Caco-2 (cell line): ENCODE measurements at regions of chr11 and their contacts with region 1.

Region 1: DNA sequence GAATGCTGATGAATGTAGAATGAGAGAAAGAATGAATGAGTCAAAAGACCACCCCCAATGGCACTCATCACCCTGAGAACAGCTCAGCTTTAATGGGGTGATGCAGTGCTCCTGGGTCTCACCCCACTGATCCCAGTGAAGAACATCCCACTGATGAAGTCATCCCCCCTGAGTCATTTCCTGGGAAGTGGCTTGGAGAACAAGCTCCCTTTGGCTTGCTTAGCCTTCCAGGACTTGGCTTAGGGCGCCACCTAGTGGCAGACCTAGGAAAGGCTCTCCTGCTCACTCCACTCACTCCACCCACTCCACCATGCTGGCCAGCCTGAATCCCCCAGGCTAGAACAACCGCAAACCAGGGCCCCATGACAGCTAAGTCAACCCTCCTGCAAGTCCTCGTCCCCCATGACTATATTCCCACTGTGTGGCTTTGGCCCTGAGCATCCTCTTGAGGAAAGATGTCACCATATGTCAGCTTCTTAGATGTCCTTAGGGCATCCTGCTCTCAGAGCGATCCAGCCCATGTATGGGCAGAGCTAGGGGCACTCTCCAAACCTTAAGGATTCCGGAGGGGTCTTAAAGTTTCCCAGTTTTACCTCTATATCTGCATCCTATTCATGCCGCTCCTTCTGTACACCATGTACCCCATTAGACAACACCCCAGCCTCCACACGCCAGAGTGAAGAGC is 17.8 kb upstream of the TMPRSS13 start:
- DNase-seq: peak; percentile 90 to 96
- H3K4me3 ChIP-seq: no peak overlapping the region
- H3K4me3 Mint-ChIP-seq: no peak overlapping the region
- H3K27ac Mint-ChIP-seq: no peak overlapping the region
- H3K4me1 ChIP-seq: peaks cover 4% of the 10 kb centered on the region
- H3K4me1 Mint-ChIP-seq: peaks cover 17% of the 10 kb centered on the region
- H3K27me3 ChIP-seq: no peaks in the 10 kb centered on the region
- H3K27me3 Mint-ChIP-seq: peaks cover 3% of the 10 kb centered on the region
- CTCF ChIP-seq: peak; percentile 99 to 100

Region 2: GRCh38 chr11:117750916-117751662 is 195.9 kb before region 1 on chr11:
- CTCF ChIA-PET with region 1: no interaction called
- POLR2A ChIA-PET with region 1: no interaction called
- intact Hi-C with region 1: no loop called
- DNase-seq: no peak
- H3K4me3 ChIP-seq: no peak overlapping the region
- H3K4me3 Mint-ChIP-seq: no peak overlapping the region
- H3K27ac Mint-ChIP-seq: no peak overlapping the region
- H3K4me1 ChIP-seq: no peaks in the 10 kb centered on the region
- H3K4me1 Mint-ChIP-seq: peaks cover 7% of the 10 kb centered on the region
- H3K27me3 ChIP-seq: no peaks in the 10 kb centered on the region
- H3K27me3 Mint-ChIP-seq: peaks cover 7% of the 10 kb centered on the region
- CTCF ChIP-seq: no peak

Region 3: GRCh38 chr11:117817368-117818040 is 129.5 kb before region 1 on chr11:
- CTCF ChIA-PET with region 1: interaction called, 107 read pairs
- POLR2A ChIA-PET with region 1: no interaction called
- intact Hi-C with region 1: loop called (anchors 1 kb)
- DNase-seq: peak; percentile 86 to 93
- H3K4me3 ChIP-seq: no peak overlapping the region
- H3K4me3 Mint-ChIP-seq: peak overlapping the region; percentile 37
- H3K27ac Mint-ChIP-seq: no peak overlapping the region
- H3K4me1 ChIP-seq: peaks cover 52% of the 10 kb centered on the region
- H3K4me1 Mint-ChIP-seq: peaks cover 23% of the 10 kb centered on the region
- H3K27me3 ChIP-seq: no peaks in the 10 kb centered on the region
- H3K27me3 Mint-ChIP-seq: no peaks in the 10 kb centered on the region
- CTCF ChIP-seq: peak; percentile 100

Region 4: DNA sequence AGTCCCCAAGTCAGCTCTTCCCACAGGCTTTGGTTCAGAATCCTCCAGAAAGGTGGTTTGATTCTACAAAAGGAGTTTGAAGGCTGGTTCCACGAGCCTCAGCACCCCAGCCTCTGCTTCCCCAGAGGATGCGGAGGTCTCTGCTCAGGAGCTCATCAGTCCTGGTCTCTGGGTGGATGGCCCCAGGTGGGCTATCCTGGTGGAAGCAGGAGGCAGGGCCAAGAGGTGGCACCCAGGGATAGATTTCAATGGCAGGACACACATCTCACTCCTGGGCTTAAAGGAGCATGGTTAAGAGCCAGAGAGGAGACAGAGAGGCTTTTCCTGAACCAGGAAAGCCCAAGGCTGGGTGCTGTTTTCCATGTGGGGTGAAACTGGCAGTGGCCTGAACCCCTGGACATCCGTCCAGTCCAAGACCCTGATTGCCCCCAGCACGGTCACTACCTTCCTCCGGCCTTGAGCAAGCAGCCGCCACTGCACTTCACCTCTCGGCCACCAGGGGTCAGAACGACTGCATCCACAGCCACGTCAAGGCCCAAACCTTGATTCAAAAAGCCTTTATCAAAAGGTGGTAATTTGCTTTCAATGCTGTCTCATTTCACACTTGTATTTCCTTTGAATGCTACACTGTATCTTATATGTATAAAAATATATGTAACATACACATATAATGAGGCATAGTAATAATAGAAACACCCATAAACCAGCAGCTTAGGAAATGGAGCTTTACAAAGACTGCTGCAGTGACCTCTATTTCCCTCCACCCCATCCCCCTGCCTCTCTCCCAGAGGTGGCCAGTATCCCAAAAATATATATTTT is 103.1 kb before region 1 on chr11:
- CTCF ChIA-PET with region 1: interaction called, 165 read pairs
- POLR2A ChIA-PET with region 1: no interaction called
- intact Hi-C with region 1: loop called (anchors 1 kb)
- DNase-seq: peak; percentile 81 to 89
- H3K4me3 ChIP-seq: no peak overlapping the region
- H3K4me3 Mint-ChIP-seq: no peak overlapping the region
- H3K27ac Mint-ChIP-seq: no peak overlapping the region
- H3K4me1 ChIP-seq: no peaks in the 10 kb centered on the region
- H3K4me1 Mint-ChIP-seq: no peaks in the 10 kb centered on the region
- H3K27me3 ChIP-seq: no peaks in the 10 kb centered on the region
- H3K27me3 Mint-ChIP-seq: peaks cover 2% of the 10 kb centered on the region
- CTCF ChIP-seq: peak; percentile 99 to 100

Region 5: GRCh38 chr11:117907251-117907981 is 39.6 kb before region 1 on chr11:
- CTCF ChIA-PET with region 1: interaction called, 46 read pairs
- POLR2A ChIA-PET with region 1: no interaction called
- intact Hi-C with region 1: loop called (anchors 1 kb)
- DNase-seq: peak; percentile 95 to 96
- H3K4me3 ChIP-seq: peak overlapping the region; percentile 31
- H3K4me3 Mint-ChIP-seq: peak overlapping the region; percentile 66
- H3K27ac Mint-ChIP-seq: peak overlapping the region; percentile 73
- H3K4me1 ChIP-seq: peaks cover 8% of the 10 kb centered on the region
- H3K4me1 Mint-ChIP-seq: peaks cover 14% of the 10 kb centered on the region
- H3K27me3 ChIP-seq: no peaks in the 10 kb centered on the region
- H3K27me3 Mint-ChIP-seq: no peaks in the 10 kb centered on the region
- CTCF ChIP-seq: no peak

Region 6: GRCh38 chr11:117932067-117932370 is 15.0 kb before region 1 on chr11:
- CTCF ChIA-PET with region 1: interaction called, 36 read pairs
- POLR2A ChIA-PET with region 1: no interaction called
- intact Hi-C with region 1: loop called (anchors 1 kb)
- DNase-seq: peak in 1 of 2 experiments; percentile 32
- H3K4me3 ChIP-seq: no peak overlapping the region
- H3K4me3 Mint-ChIP-seq: no peak overlapping the region
- H3K27ac Mint-ChIP-seq: peak overlapping the region; percentile 99
- H3K4me1 ChIP-seq: peaks cover 51% of the 10 kb centered on the region
- H3K4me1 Mint-ChIP-seq: peaks cover 56% of the 10 kb centered on the region
- H3K27me3 ChIP-seq: no peaks in the 10 kb centered on the region
- H3K27me3 Mint-ChIP-seq: no peaks in the 10 kb centered on the region
- CTCF ChIP-seq: no peak

Region 7: GRCh38 chr11:118290923-118291322 is 343.9 kb after region 1 on chr11:
- CTCF ChIA-PET with region 1: no interaction called
- POLR2A ChIA-PET with region 1: no interaction called
- intact Hi-C with region 1: no loop called
- DNase-seq: peak; percentile 80 to 82
- H3K4me3 ChIP-seq: no peak overlapping the region
- H3K4me3 Mint-ChIP-seq: no peak overlapping the region
- H3K27ac Mint-ChIP-seq: no peak overlapping the region
- H3K4me1 ChIP-seq: peaks cover 9% of the 10 kb centered on the region
- H3K4me1 Mint-ChIP-seq: peaks cover 24% of the 10 kb centered on the region
- H3K27me3 ChIP-seq: no peaks in the 10 kb centered on the region
- H3K27me3 Mint-ChIP-seq: no peaks in the 10 kb centered on the region
- CTCF ChIP-seq: peak; percentile 61 to 70